Posterior vena cava (tissue), 2 donors: ENCODE measurements at regions of chr2 and their contacts with region 1.

Region 1: DNA sequence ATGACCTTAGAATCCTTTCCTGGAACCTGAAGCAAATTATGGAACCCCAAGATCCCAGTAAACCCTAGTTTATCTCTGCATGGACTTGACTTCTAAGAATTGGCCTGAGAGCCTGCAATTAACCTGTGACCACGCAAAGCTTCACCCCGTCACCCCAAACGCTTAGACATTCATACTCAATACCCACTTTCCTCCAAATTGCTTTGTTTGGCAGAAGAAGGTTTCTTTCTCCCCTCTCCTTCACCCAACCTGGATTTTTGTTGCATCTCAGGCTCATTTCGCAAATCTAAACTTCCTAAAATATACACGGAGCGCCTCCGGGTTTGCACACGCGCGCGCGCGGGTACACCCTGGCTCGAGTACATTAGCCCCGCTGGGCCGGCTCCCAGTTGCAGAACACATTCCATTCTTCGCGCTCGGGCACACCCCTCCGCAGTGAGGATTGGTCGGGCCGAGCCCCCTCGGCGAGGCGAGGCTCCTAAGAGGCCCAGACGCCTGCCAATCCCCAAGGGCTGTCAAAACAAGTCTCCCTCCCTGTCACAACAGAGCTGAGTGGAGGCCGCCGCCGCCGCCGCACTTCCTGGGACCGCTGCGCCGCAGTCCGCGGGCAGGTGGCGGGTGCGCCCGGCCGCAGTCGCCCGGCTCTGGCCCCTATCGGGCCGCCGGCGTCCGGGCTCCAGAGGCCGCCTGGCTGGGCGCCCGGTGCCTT is at the start of gene PLCL1:
- DNase-seq: peak; percentile 96
- total RNA-seq, gene PLCL1: 6.9 to 7.5 TPM

Region 2: DNA sequence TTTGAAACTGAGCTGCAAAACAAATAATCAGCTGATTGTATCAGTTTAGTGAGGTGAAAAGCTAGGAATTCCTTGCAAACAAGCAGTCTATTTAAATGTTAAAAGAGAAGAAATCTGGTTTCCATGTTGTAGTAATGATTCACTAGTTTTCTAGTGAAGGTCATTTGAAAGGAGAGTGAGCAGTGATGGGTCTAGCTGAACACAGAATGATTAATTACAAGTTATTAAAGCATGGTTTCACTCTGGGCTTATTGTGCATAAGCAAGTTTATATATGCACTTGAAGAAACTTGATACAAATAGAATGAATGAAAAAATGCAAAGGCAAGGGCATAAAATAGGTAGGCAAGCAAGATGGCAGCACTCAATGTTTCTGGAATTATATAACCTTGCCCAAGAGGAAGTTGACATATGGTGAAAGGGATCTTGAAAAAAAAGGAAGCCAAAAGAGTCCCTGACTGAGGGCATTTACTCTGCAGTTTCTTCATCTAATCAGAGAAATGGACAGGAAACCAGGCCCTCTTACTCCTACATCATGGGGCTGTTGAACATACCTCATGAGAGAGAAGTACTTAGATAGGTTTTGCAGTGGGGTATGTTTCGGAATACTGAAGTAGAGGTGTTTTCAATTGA is 53.4 kb after region 1 on chr2:
- intact Hi-C with region 1: no loop called
- DNase-seq: no peak

Region 3: GRCh38 chr2:198127627-198128026 is 323.4 kb after region 1 on chr2:
- intact Hi-C with region 1: loop called (anchors 2 to 5 kb)
- DNase-seq: no peak

Region 4: GRCh38 chr2:198296665-198297308 is 492.6 kb after region 1 on chr2:
- intact Hi-C with region 1: loop called (anchors 5 kb)
- DNase-seq: no peak